Activated naive CD4-positive, alpha-beta T cell treated with anti-CD3 and anti-CD28 coated beads, Interleukin-2, amount 10 ng/mL, durations not matched to agents 7 days and 5 days (primary cell): ENCODE measurements at regions of chr3 and their contacts with region 1.

Region 1: GRCh38 chr3:32143849-32144757 is 37.7 kb downstream of the GPD1L start:
- DNase-seq: peak; percentile 60
- H3K4me3 Mint-ChIP-seq: no peak overlapping the region
- H3K27ac Mint-ChIP-seq: no peak overlapping the region
- H3K4me1 Mint-ChIP-seq: peaks cover 24% of the 10 kb centered on the region
- H3K27me3 Mint-ChIP-seq: no peaks in the 10 kb centered on the region

Region 2: GRCh38 chr3:31488450-31489017 is 655.6 kb before region 1 on chr3:
- CTCF ChIA-PET with region 1: no interaction called
- DNase-seq: no peak
- H3K4me3 Mint-ChIP-seq: no peak overlapping the region
- H3K27ac Mint-ChIP-seq: no peak overlapping the region
- H3K4me1 Mint-ChIP-seq: no peaks in the 10 kb centered on the region
- H3K27me3 Mint-ChIP-seq: peaks cover 3% of the 10 kb centered on the region

Region 3: GRCh38 chr3:32154205-32154579 is 10.1 kb after region 1 on chr3:
- CTCF ChIA-PET with region 1: interaction called, 13 read pairs
- DNase-seq: no peak
- H3K4me3 Mint-ChIP-seq: no peak overlapping the region
- H3K27ac Mint-ChIP-seq: no peak overlapping the region
- H3K4me1 Mint-ChIP-seq: no peaks in the 10 kb centered on the region
- H3K27me3 Mint-ChIP-seq: no peaks in the 10 kb centered on the region